HEK293 (cell line): ENCODE measurements at regions of chr11 and their contacts with region 1.

Region 1: GRCh38 chr11:78645226-78646202 is 70.8 kb upstream of the NARS2 start:
- H3K4me3 ChIP-seq: no peak overlapping the region
- H3K27ac ChIP-seq: no peak overlapping the region
- H3K4me1 ChIP-seq: no peaks in the 10 kb centered on the region
- CTCF ChIP-seq: peak; percentile 84

Region 2: DNA sequence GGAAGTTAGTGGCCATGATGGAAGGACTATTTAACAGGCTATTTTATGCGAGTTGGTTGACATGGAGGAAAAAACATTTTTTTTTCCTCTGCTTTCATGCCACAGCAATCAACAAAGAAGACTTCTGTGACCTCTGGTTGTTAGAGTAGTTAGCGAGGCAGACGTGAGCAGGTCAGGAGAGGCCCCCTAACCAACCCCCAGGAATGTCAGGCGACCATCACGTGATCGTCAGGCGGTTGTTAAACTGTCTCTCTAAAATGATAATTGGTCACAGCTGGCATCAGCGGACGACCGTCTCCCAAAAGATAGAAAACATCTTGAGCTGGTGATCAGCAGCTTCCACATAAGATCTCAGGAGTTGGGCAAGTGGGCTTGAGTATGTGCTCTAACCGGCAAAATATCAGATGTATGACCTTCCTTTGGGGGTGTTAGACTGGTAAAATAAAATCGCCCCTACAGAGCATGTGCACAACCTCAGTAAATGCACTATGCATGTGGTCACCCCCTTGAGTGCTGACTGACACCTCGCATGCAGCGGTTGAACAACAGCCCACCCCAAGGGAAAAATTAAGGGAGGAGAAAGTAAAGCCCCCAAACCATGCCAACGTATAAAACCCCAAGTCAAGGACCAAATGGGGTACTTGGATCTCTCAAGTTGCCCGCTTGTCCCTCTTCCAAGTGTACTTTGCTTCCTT is 49.9 kb before region 1 on chr11:
- CTCF ChIA-PET with region 1: no interaction called
- POLR2A ChIA-PET with region 1: no interaction called
- H3K4me3 ChIP-seq: no peak overlapping the region
- H3K27ac ChIP-seq: no peak overlapping the region
- H3K4me1 ChIP-seq: no peaks in the 10 kb centered on the region
- CTCF ChIP-seq: no peak

Region 3: GRCh38 chr11:78676026-78676557 is 30.6 kb after region 1 on chr11:
- CTCF ChIA-PET with region 1: interaction called, 12 read pairs
- POLR2A ChIA-PET with region 1: no interaction called
- H3K4me3 ChIP-seq: no peak overlapping the region
- H3K27ac ChIP-seq: no peak overlapping the region
- H3K4me1 ChIP-seq: no peaks in the 10 kb centered on the region
- CTCF ChIP-seq: no peak

Region 4: GRCh38 chr11:78715639-78716311 is 70.3 kb after region 1 on chr11:
- CTCF ChIA-PET with region 1: interaction called, 108 read pairs
- POLR2A ChIA-PET with region 1: interaction called, 3 read pairs
- H3K4me3 ChIP-seq: no peak overlapping the region
- H3K27ac ChIP-seq: no peak overlapping the region
- H3K4me1 ChIP-seq: no peaks in the 10 kb centered on the region
- CTCF ChIP-seq: peak; percentile 69

Region 5: DNA sequence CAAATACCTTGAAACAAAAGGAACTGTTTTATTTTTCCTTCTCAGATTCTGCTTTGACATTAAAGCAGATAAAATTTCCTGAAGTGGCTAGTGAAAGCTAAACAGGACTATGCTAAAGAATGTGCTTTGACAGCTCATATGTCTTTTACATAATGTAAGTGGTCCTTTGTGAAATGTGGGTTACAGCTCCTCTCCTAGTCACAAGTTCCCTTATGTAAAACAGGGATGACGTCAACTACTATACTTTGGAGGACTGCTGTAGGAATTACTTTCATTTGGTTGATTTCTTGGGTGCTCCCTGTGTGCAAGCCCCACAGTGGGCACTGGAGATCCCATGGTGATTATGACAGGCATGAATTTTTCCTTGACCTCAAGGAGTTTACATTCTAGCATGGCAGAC is 145.7 kb after region 1 on chr11:
- CTCF ChIA-PET with region 1: interaction called, 17 read pairs
- POLR2A ChIA-PET with region 1: no interaction called
- H3K4me3 ChIP-seq: no peak overlapping the region
- H3K27ac ChIP-seq: no peak overlapping the region
- H3K4me1 ChIP-seq: no peaks in the 10 kb centered on the region
- CTCF ChIP-seq: no peak

Region 6: GRCh38 chr11:78961247-78961646 is 315.7 kb after region 1 on chr11:
- CTCF ChIA-PET with region 1: interaction called, 24 read pairs
- POLR2A ChIA-PET with region 1: no interaction called
- H3K4me3 ChIP-seq: no peak overlapping the region
- H3K27ac ChIP-seq: no peak overlapping the region
- H3K4me1 ChIP-seq: no peaks in the 10 kb centered on the region
- CTCF ChIP-seq: peak; percentile 28; the same call in 1 of the 2 replicates

Region 7: GRCh38 chr11:79076526-79077115 is 431.1 kb after region 1 on chr11:
- CTCF ChIA-PET with region 1: interaction called, 10 read pairs
- POLR2A ChIA-PET with region 1: no interaction called
- H3K4me3 ChIP-seq: no peak overlapping the region
- H3K27ac ChIP-seq: no peak overlapping the region
- H3K4me1 ChIP-seq: no peaks in the 10 kb centered on the region
- CTCF ChIP-seq: no peak